Gastrocnemius medialis (tissue), 4 donors: ENCODE measurements at regions of chr6 and their contacts with region 1.

Region 1: DNA sequence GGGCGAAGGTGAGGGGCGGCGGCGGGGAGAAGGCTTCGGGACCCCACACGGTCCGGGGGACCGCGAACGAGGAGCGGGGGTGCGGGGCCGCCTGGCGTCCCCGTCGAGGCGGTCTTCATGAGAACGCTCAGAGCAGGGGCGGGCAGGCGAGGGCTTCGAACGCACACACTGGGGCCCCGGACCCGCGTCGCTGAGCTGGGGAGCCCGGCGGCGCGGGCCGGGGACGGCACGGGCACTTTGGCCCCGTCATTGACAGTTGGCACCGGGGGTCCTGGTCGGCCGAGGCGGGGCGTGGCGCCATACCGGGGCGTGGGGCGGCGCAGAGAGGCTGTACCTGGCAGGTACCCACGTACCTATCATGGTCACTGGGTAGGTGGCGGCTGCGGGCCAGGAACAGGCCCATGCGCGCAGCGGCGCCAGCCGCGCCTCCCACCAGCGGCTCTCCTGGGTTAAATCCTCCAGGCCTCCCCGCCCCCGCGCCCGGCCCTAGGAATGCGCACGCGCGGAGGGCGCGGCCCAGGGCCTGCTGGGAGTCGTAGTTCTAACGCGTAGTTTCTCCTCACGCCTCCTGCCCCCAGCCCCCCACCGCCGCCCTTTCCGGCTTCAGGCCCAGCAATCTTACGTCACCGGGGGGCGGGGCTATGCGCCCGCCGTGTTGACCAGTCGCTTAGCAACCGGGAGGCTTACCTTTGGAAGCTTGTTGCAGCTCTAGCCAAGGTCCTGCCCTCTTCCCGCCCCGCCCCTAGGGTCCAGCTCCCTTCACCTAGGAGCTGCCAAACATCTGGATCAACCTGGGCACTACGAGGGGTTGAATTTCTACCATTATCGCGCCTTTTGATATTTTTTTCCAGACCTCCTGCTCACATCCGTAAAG is at the starts of genes PACRG and PRKN:
- DNase-seq: peak; percentile 95 to 99
- ATAC-seq: peak; percentile 95 to 96
- H3K4me3 ChIP-seq: peak within 1 kb of the TSS; percentile 74 to 98 (median 82)
- H3K27ac ChIP-seq: peak within 1 kb of the TSS; percentile 92 to 97 (median 94)
- H3K4me1 ChIP-seq: peaks cover 14% of the 10 kb centered on the region in 2 donors
- H3K27me3 ChIP-seq: no peaks in the 10 kb centered on the region
- CTCF ChIP-seq: no peak
- POLR2A ChIP-seq: peak; percentile 92 to 96
- total RNA-seq, gene PACRG: 0.29 to 1.6 (median 0.61) TPM
- total RNA-seq, gene PRKN: 8.4 to 21.6 (median 13.7) TPM

Region 2: DNA sequence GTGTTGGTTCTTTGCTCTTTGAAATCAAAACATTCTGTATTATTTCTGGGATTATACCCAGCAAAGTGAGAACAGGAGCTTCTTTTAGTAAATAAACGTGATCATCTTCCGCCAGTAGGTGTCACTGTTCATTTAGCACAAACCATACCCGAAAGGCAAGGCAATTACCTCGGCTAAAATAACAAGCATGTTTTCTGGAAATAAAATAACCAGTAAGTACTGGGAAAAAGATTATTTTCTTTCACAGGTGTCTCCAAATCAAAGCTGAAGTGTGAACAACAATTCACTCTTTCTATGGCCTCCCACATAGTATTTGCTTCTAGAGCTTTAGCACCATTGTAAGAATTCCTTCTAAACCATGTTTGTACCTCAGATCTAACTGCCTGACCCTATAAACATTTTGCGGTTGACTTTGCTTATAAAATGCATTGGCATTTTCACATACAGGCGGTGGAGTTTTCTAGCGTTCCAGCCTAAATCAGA is 1309.0 kb before region 1 on chr6:
- in situ Hi-C with region 1: loop called in 2 of 4 experiments (anchors 25 kb)
- intact Hi-C with region 1: loop called (anchors 5 kb)
- DNase-seq: peak in 1 of 2 donors; percentile 51
- ATAC-seq: peak; percentile 75 to 80
- H3K4me3 ChIP-seq: no peak overlapping the region
- H3K27ac ChIP-seq: peak overlapping the region; percentile 78 to 93 (median 82)
- H3K4me1 ChIP-seq: peaks cover 25 to 43% of the 10 kb centered on the region in 2 donors
- H3K27me3 ChIP-seq: no peaks in the 10 kb centered on the region
- CTCF ChIP-seq: peak; percentile 62 to 75 (median 72)
- POLR2A ChIP-seq: no peak

Region 3: DNA sequence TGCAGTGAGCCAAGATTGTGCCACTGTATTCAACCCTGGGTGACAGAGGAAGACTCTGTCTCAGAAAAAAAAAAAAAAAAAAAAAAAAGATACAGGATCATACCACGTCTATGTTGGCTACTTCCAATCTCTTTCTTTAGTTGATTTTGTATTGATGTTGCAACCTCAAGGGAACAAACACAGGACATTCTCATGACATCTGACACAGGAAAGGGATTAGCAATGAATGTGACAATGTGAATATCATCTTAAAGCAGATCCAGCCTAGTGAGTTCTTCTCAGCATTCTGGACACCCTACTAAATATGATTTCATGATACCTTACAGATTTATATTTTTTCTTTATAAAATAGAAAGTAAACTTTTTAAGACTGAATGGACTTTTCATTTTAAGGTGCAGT is 580.3 kb before region 1 on chr6:
- in situ Hi-C with region 1: no loop called
- intact Hi-C with region 1: loop called (anchors 5 kb)
- DNase-seq: no peak
- ATAC-seq: peak; percentile 88 to 91
- H3K4me3 ChIP-seq: no peak overlapping the region
- H3K27ac ChIP-seq: peak overlapping the region in 3 of 4 donors; percentile 20 to 63 (median 47)
- H3K4me1 ChIP-seq: peaks cover 9 to 42% of the 10 kb centered on the region in 2 donors
- H3K27me3 ChIP-seq: no peaks in the 10 kb centered on the region
- CTCF ChIP-seq: no peak
- POLR2A ChIP-seq: no peak

Region 4: DNA sequence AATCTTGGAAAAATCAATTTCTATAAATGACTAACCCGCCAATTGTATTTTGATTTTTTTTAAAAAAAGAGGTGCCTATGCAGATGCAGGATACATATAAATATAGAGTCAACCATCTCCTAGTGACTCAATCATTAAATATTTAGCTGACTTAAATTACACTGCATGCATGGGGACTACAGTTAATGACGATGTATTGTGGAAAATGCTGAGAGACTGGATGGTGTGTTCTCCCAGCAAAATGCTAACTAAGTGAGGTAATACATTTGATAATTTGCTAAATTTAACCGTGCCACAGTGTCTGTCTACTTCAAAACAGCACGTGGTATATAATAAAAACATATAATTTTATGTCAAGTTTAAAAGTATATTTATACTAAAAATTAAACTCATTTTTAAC is 341.6 kb before region 1 on chr6:
- in situ Hi-C with region 1: no loop called
- intact Hi-C with region 1: loop called (anchors 5 kb)
- DNase-seq: no peak
- ATAC-seq: no peak
- H3K4me3 ChIP-seq: no peak overlapping the region
- H3K27ac ChIP-seq: no peak overlapping the region
- H3K4me1 ChIP-seq: peaks cover 3 to 11% of the 10 kb centered on the region in 2 donors
- H3K27me3 ChIP-seq: no peaks in the 10 kb centered on the region
- CTCF ChIP-seq: no peak
- POLR2A ChIP-seq: no peak

Region 5: DNA sequence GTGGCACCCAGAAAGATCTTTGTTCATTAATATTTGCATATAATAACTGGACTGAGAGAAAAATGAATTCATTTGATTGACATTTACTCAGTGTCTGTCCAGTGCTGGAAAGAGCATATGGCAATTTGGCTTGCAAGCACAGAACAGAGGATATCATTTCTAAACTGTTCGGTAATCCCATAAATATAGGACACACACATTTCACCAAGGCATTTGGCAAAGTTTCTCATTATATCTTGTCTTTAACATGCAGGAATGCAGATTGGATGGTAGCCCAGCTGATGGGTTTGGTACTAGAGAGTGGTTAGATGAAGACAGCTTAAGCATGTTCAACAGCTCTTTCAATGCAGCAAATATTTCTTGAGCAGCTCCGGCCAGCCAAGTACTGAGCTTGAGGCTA is 259.2 kb before region 1 on chr6:
- in situ Hi-C with region 1: no loop called
- intact Hi-C with region 1: loop called (anchors 10 kb)
- DNase-seq: no peak
- ATAC-seq: peak; percentile 51 to 56
- H3K4me3 ChIP-seq: no peak overlapping the region
- H3K27ac ChIP-seq: peak overlapping the region in 2 of 4 donors; percentile 46 to 58
- H3K4me1 ChIP-seq: peaks cover 34 to 38% of the 10 kb centered on the region in 2 donors
- H3K27me3 ChIP-seq: no peaks in the 10 kb centered on the region
- CTCF ChIP-seq: no peak
- POLR2A ChIP-seq: no peak

Region 6: GRCh38 chr6:163814494-163815364 is 1087.2 kb after region 1 on chr6:
- in situ Hi-C with region 1: no loop called
- intact Hi-C with region 1: loop called (anchors 5 kb)
- DNase-seq: peak; percentile 22 to 48
- ATAC-seq: peak; percentile 97 to 99
- H3K4me3 ChIP-seq: no peak overlapping the region
- H3K27ac ChIP-seq: peak overlapping the region; percentile 76 to 87 (median 84)
- H3K4me1 ChIP-seq: peaks cover 19 to 20% of the 10 kb centered on the region in 2 donors
- H3K27me3 ChIP-seq: no peaks in the 10 kb centered on the region
- CTCF ChIP-seq: peak; percentile 40 to 55 (median 48)
- POLR2A ChIP-seq: no peak